ENCODE measurements at regions of chr2 and their contacts with region 1.

Region 1: DNA sequence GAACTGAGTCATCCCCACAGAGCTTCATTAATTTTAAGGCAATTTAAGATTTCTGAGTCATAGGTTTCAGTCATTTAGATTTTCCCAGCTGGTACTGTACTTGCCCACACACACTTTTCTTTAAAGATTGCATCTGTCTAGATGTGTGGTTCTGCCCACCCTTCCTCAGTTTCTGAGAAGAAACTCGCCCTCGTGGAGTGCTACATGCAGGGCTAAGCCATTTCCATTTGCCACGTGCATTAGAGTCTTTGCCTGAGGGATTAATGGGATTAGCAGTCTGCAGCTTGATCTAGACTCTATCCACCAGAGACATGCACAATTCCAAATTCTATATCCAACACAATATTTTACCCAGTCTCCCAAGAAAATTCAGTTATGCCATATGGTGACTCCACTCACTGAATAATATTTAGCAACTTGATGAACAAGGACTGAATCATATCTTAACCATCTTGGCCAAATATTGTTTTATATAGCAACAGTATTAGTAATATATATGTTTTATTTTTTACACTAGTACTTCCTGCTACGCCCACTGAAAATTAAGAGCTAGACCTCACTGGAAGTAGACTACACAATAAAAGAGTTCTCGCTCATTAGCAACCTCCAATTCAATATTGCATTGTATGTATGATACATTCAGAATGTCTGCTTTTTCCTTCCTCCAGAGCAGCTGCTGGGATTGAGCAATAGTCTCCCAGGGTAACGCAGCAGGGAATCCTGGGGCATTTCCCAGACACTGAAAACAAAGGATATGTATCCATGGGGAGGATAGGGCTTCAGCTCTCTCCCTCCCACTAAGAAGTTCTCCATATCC is 14.2 kb upstream of the TRIB2 start:
- DNase-seq: peak in 2 of 5 donors; percentile 43 to 46
- ATAC-seq: peak; percentile 37 to 89 (median 76)
- H3K4me3 ChIP-seq: no peak overlapping the region
- H3K27ac ChIP-seq: peak overlapping the region in 1 of 12 donors; percentile 21
- H3K4me1 ChIP-seq: peaks cover 0 to 18% (median 2%) of the 10 kb centered on the region in 12 donors
- H3K27me3 ChIP-seq: no peaks in the 10 kb centered on the region
- CTCF ChIP-seq: no peak
- POLR2A ChIP-seq: no peak

Region 2: GRCh38 chr2:12543978-12544558 is 158.4 kb before region 1 on chr2:
- intact Hi-C with region 1: loop called in 1 of 10 experiments (anchors 10 kb)
- DNase-seq: no peak
- ATAC-seq: peak in 2 of 4 donors; percentile 25 to 31
- H3K4me3 ChIP-seq: no peak overlapping the region
- H3K27ac ChIP-seq: peak overlapping the region in 6 of 12 donors; percentile 0 to 66 (median 32)
- H3K4me1 ChIP-seq: peaks cover 0 to 12% (median 7%) of the 10 kb centered on the region in 12 donors
- H3K27me3 ChIP-seq: no peaks in the 10 kb centered on the region
- CTCF ChIP-seq: no peak
- POLR2A ChIP-seq: no peak

Region 3: DNA sequence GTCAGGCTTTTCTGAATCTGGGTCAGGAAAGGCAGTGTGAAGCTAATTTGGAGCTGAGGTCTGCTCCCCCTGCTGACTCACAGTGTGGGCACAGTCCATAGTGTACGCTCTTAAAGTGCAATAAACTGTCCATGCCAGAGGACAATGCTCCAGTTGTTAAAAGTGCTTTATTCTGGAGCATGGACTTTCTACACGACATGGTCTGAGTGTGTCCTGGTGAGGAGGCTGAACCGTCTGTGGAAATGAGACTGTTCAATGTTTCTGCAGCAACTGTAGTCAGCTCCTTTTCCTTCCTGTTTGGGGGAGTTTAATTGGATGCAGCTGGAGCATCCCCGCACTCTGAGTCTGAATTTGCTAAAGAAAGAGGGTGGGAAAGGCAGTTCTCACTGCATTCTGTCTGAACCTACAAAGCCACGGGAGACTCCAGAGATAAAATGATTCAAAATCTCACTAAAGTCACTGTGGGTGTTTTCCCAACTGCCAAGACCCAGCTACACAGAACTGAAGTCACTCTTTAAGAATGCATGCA is 96.0 kb before region 1 on chr2:
- intact Hi-C with region 1: no loop called
- DNase-seq: peak in 1 of 5 donors; percentile 14
- ATAC-seq: peak in 3 of 4 donors; percentile 58 to 78 (median 66)
- H3K4me3 ChIP-seq: no peak overlapping the region
- H3K27ac ChIP-seq: peak overlapping the region in 2 of 12 donors; percentile 3 to 15
- H3K4me1 ChIP-seq: peaks cover 0 to 15% (median 7%) of the 10 kb centered on the region in 12 donors
- H3K27me3 ChIP-seq: no peaks in the 10 kb centered on the region
- CTCF ChIP-seq: peak in 4 of 12 donors; percentile 13 to 44 (median 22)
- POLR2A ChIP-seq: no peak

Region 4: DNA sequence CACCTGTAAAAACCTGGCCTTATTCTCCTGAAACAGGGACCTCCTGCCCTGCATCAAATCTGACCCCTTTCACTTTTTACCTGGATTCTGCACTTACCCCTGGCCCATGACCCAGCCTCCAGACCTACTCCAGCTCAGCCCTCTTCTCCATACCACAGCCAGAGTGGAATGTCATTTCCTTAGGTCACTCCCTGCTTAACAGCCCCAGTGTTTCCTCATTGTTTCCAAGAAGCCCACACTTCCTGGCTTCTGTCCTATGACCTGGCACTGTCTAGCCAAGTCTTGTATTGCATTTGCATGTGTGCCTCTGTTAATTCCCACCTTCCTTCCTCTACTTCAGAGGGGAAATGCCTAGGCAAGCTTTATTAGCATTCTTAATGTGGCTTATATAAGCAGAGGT is 37.2 kb before region 1 on chr2:
- intact Hi-C with region 1: loop called in 2 of 10 experiments (anchors 2 to 5 kb)
- DNase-seq: peak in 3 of 5 donors; percentile 24 to 34 (median 31)
- ATAC-seq: peak; percentile 17 to 89 (median 81)
- H3K4me3 ChIP-seq: no peak overlapping the region
- H3K27ac ChIP-seq: peak overlapping the region in 4 of 12 donors; percentile 0 to 39 (median 30)
- H3K4me1 ChIP-seq: peaks cover 0 to 29% (median 14%) of the 10 kb centered on the region in 12 donors
- H3K27me3 ChIP-seq: no peaks in the 10 kb centered on the region
- CTCF ChIP-seq: no peak
- POLR2A ChIP-seq: no peak

Region 5: GRCh38 chr2:12750166-12750905 is 47.8 kb after region 1 on chr2:
- intact Hi-C with region 1: no loop called
- DNase-seq: no peak
- ATAC-seq: no peak
- H3K4me3 ChIP-seq: no peak overlapping the region
- H3K27ac ChIP-seq: no peak overlapping the region
- H3K4me1 ChIP-seq: peaks cover 0 to 16% (median 8%) of the 10 kb centered on the region in 12 donors
- H3K27me3 ChIP-seq: no peaks in the 10 kb centered on the region
- CTCF ChIP-seq: no peak
- POLR2A ChIP-seq: no peak

Measured in heart left ventricle (tissue), 16 donors.